Activated naive CD8-positive, alpha-beta T cell treated with anti-CD3 and anti-CD28 coated beads, Interleukin-2, amount 10 ng/mL, durations not matched to agents 7 days and 5 days (primary cell): ENCODE measurements at regions of chr1 and their contacts with region 1.

Region 1: DNA sequence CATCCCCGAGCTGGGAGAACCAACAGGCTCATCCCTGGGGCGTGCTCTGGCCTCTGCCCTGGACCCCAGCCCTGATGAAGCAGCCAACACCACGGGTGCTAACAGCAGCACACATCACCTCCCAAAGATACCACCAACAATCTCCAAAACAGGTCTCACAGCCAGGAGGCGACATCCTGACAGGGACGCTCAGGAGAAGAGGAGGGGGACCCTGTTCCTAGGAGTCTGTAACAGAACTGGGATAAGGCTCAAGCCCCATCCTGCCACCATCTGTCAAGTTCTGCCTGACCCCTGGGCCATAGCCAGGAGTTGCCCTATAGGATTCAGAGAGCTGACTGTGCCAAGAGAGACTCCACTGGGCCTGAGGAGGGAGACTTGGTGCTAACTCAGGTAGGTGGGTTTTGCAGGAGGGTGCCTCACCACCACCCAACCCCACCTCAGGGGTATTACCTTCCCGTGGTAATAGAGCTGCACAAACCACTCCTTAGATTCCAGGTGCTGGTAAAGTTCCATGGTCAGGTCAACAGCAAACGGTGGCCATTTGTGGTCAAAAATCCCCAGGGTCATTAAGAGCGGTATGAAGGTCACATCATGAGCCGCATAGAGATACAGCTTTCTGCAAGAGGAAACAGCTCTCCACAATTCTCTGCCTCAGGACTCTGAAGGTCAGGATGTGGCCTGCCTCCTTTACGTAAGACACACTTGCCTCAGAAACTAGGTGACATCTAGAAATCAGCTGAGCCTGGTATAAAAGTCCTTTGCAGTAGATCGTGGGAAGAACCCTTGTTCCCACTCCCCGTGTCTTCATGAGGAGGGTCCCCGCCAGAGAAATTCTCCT is 22.3 kb downstream of the ACP6 start:
- DNase-seq: peak; percentile 56
- ATAC-seq: peak; percentile 91
- H3K4me3 Mint-ChIP-seq: peak overlapping the region; percentile 68
- H3K27ac Mint-ChIP-seq: peak overlapping the region; percentile 93
- H3K4me1 Mint-ChIP-seq: peaks cover 60% of the 10 kb centered on the region
- H3K27me3 Mint-ChIP-seq: no peaks in the 10 kb centered on the region

Region 2: DNA sequence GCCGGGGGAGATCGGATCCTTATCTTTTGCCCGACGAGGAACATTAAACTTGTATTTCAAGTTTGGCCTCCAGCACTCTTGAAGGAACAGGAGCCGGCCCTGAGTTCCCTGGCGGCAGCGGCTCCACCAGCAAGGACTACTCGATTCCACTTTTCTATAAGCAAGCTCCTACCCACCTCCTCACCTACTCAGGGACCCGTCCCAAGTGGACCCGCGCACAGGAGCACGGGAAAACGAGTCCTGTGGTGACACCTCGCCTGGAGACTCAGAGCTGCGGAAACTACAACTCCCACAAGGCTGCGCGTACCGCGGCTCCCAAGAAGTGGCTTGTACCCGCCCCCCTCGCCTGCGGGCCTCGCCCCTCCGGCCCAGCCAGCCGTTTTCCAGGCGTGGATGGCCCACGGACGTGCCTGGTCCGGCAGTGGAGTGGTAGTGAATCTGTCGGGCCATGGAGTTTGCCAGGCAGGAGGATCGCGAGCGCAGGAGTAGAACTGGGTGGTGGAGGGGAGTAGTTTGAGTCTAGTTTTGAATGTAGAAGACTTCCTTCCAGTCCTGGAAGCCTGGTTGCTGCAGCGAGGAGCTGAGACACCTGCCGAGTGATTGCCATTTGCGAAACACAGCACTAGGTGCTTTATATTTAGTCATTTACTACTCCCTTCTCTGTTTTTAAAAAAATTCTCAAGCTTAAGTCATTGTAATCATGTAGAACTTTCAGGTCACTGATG is 22.5 kb after region 1 on chr1 and contains the start of gene ACP6:
- POLR2A ChIA-PET with region 1: interaction called, 31 read pairs
- DNase-seq: peak; percentile 87
- ATAC-seq: peak; percentile 94
- H3K4me3 Mint-ChIP-seq: peak within 1 kb of the TSS; percentile 95
- H3K27ac Mint-ChIP-seq: peak within 1 kb of the TSS; percentile 94
- H3K4me1 Mint-ChIP-seq: peaks cover 22% of the 10 kb centered on the region
- H3K27me3 Mint-ChIP-seq: peaks cover 22% of the 10 kb centered on the region
- total RNA-seq, gene ACP6: 13.6 to 18.2 TPM

Region 3: GRCh38 chr1:147781056-147781471 is 133.0 kb after region 1 on chr1:
- POLR2A ChIA-PET with region 1: no interaction called
- DNase-seq: no peak
- ATAC-seq: no peak
- H3K4me3 Mint-ChIP-seq: no peak overlapping the region
- H3K27ac Mint-ChIP-seq: no peak overlapping the region
- H3K4me1 Mint-ChIP-seq: no peaks in the 10 kb centered on the region
- H3K27me3 Mint-ChIP-seq: peaks cover 43% of the 10 kb centered on the region